CD14-positive monocyte (primary cell): ENCODE measurements at regions of chr11 and their contacts with region 1.

Region 1: DNA sequence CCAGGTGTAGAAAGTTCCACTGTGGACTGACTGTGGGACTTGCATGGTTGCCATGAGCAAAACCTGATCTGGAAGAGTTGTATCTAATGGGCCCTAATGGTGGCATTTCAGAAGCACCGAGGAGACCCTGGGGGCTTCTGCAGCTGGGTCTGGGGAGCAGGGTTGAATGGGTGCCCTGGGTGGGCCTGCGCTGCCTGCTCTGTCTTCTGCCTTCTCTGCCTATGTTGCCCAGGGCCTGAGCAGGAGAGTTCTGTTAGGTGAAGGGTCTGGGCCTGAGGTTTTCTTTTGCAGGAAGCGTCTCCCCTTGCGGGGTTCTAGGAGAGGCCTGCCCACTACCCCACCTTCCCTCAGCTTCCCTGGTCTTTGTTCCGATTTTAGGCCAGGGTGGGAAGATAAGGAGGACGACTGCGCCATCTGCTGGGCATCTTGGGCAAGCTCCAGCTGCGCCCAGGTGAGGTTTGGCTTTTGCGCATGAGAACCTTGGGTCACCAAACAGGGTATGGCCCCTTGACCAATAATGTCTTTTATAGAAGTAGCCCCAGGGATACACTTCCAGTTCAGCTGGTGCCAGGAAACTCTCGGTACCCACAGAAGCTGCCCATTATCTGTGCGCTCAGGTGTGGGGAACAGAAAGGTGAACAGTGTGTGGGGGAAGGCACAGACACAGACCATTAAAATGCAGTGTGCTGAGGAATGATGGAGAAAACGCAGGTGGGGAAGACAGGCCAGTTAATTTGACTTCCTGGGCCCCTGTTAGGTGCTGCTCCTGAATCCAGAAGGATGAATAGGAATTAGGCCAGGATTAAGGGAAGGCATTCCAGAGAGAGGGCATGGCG is 23.2 kb downstream of the COMMD9 start:
- DNase-seq: peak; percentile 38 to 54 (median 44)
- H3K4me3 ChIP-seq: no peak overlapping the region
- H3K4me3 Mint-ChIP-seq: no peak overlapping the region
- H3K27ac ChIP-seq: no peak overlapping the region
- H3K27ac Mint-ChIP-seq: no peak overlapping the region
- H3K4me1 ChIP-seq: no peaks in the 10 kb centered on the region
- H3K4me1 Mint-ChIP-seq: peaks cover 4% of the 10 kb centered on the region
- H3K27me3 ChIP-seq: no peaks in the 10 kb centered on the region
- H3K27me3 Mint-ChIP-seq: peaks cover 2 to 10% (median 5%) of the 10 kb centered on the region in 3 donors
- CTCF ChIP-seq: peak; percentile 87

Region 2: GRCh38 chr11:36041988-36042611 is 223.9 kb before region 1 on chr11:
- intact Hi-C with region 1: loop called in 1 of 2 experiments (anchors 5 kb)
- DNase-seq: no peak
- H3K4me3 ChIP-seq: no peak overlapping the region
- H3K4me3 Mint-ChIP-seq: no peak overlapping the region
- H3K27ac ChIP-seq: no peak overlapping the region
- H3K27ac Mint-ChIP-seq: no peak overlapping the region
- H3K4me1 ChIP-seq: no peaks in the 10 kb centered on the region
- H3K4me1 Mint-ChIP-seq: peaks cover 2% of the 10 kb centered on the region
- H3K27me3 ChIP-seq: no peaks in the 10 kb centered on the region
- H3K27me3 Mint-ChIP-seq: peaks cover 0 to 4% (median 0%) of the 10 kb centered on the region in 3 donors
- CTCF ChIP-seq: peak; percentile 71